Colonic mucosa (tissue), 4 donors: ENCODE measurements at regions of chr2 and their contacts with region 1.

Region 1: GRCh38 chr2:48471048-48471474 is 58.9 kb upstream of the STON1 start:
- DNase-seq: no peak
- H3K4me3 ChIP-seq: no peak overlapping the region
- H3K27ac ChIP-seq: no peak overlapping the region
- H3K4me1 ChIP-seq: no peaks in the 10 kb centered on the region
- H3K27me3 ChIP-seq: no peaks in the 10 kb centered on the region
- CTCF ChIP-seq: peak; percentile 51

Region 2: DNA sequence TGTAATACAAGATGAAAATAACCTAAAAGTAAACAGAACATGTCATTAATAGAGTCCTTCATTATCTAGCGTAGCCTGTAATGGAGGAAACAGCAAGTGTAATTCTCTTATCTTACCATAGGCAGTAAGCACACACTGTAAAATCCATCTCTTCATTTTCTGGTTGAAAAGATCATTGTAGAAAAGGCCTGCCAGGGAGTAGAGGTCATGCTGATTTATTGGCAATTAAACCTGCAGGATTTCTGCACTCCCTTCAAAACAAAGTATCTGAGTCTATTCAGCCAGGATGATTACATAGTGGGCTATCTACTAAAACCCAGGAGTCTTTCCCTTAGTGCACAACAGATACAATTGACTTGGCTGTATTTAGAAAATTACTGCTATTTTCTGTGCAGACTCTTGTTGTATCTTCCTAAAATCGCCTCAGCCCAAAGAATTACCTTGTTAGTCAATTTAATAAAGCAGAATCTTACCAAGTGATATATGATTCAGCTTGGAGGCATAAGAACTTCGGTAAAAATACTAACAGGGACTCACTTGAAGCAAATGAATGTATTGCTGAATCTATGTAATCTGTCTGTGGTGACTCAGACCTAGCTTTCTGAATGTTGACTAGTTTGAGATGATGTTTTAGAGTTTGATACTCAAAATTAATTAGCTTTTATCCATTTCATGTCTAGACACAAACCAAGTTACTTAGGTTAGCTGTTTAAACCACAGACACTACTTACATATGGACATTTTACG is 191.5 kb before region 1 on chr2:
- intact Hi-C with region 1: no loop called
- DNase-seq: no peak
- H3K4me3 ChIP-seq: no peak overlapping the region
- H3K27ac ChIP-seq: no peak overlapping the region
- H3K4me1 ChIP-seq: no peaks in the 10 kb centered on the region
- H3K27me3 ChIP-seq: no peaks in the 10 kb centered on the region
- CTCF ChIP-seq: no peak

Region 3: DNA sequence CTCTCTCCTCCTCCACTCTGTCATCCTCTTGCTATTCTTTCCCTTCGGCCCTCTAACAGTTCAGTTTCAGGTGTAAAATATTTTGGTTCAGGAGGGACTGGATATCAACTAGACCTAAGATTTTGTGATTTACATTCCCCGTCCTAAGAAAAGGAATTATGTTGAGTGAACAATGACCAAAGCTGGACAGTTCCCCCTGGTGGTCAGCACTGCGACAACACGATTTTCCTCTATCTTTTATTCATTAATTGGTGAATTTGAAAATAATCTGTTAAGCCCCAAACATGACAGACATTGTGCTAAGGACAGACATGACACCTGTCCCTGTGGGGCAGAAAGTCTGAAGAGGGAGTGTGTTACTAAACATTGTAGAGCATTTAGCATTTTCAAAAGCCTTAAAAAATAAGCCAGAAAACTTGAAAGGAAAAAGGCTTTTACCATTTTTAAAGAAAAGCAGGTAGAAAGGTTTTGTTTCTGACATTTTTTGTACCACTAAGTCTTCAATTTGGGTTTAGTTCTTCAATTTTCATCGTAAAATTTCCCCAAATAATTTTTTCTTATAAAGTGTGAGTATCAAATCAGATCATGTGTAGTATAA is 118.2 kb after region 1 on chr2:
- intact Hi-C with region 1: loop called (anchors 10 kb)
- DNase-seq: no peak
- H3K4me3 ChIP-seq: no peak overlapping the region
- H3K27ac ChIP-seq: no peak overlapping the region
- H3K4me1 ChIP-seq: no peaks in the 10 kb centered on the region
- H3K27me3 ChIP-seq: no peaks in the 10 kb centered on the region
- CTCF ChIP-seq: peak; percentile 36